Ascending aorta (tissue), 2 donors: ENCODE measurements at regions of chr9 and their contacts with region 1.

Region 1: GRCh38 chr9:127916665-127917613 is at the start of gene ST6GALNAC4:
- DNase-seq: peak; percentile 81 to 97
- H3K4me3 ChIP-seq: peak within 1 kb of the TSS; percentile 64 to 69
- H3K27ac ChIP-seq: peak within 1 kb of the TSS; percentile 69 to 79
- H3K4me1 ChIP-seq: peaks cover 10 to 47% of the 10 kb centered on the region in 2 donors
- H3K27me3 ChIP-seq: no peaks in the 10 kb centered on the region
- CTCF ChIP-seq: no peak
- total RNA-seq, gene ST6GALNAC4: 134 TPM

Region 2: DNA sequence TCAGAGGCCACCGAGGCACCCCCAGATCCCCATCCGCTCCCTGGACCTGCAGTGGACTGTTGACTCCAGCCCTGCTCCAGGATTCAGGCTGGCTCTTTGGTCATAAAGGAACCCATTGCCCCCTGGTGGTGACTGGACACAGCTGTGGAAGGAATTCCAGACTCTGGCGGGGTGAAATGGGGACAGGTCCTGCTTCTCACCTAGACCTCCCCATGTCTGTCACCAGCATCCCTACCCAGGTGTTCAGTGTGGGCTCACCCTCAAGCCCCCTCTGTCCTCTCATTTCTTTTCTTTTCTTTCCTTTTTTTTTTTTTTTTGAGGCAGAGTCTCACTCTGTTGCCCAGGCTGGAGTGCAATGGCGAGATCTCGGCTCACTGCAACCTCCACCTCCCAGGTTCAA is 330.4 kb before region 1 on chr9:
- intact Hi-C with region 1: loop called (anchors 1 kb)
- DNase-seq: peak in 1 of 2 donors; percentile 92
- H3K4me3 ChIP-seq: no peak overlapping the region
- H3K27ac ChIP-seq: no peak overlapping the region
- H3K4me1 ChIP-seq: peaks cover 0 to 9% of the 10 kb centered on the region in 2 donors
- H3K27me3 ChIP-seq: no peaks in the 10 kb centered on the region
- CTCF ChIP-seq: peak; percentile 78 to 96 (median 89)

Region 3: DNA sequence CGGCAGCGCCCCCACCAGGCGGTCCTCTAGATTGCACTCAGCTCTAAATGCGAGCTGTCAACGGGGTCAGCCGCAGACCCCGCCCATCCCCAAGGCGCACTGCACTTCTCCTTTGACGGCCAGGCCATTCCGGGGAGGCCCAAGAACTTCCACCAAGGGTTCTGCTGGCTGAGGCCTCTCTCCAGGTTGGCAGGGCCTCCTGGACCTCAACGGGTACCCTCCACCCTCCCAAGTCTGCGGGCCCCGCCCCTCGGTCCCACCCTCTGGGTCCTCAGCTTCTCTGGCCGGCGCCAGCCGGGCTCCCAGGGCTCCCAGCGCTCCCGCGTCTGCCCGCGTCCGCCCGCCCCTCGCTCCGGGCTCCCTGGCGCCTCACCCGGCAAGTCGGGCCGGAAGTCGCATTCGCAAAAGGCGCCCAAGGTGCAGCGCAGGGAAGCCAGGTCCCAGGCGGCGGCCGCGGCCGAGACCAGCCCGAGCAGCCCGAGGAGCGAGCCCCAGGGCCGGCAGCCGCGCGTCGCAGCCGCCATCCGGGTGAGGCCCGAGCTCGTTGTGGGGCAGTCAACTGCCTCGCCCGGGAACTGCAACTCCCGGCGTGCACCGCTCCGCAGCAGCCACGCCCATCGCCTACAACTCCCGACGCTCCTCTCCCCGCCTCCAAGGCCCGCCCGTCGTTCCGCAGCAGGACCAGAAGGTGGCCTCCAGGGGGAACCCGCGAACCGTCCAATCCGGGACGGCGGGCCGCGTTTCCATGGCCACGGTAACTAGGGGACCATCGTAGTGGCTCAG is 182.0 kb before region 1 on chr9 and contains the start of gene TOR2A:
- intact Hi-C with region 1: loop called (anchors 1 kb)
- DNase-seq: peak; percentile 80 to 99
- H3K4me3 ChIP-seq: peak within 1 kb of the TSS; percentile 73 to 80
- H3K27ac ChIP-seq: peak within 1 kb of the TSS; percentile 92 to 97
- H3K4me1 ChIP-seq: peaks cover 6 to 7% of the 10 kb centered on the region in 2 donors
- H3K27me3 ChIP-seq: no peaks in the 10 kb centered on the region
- CTCF ChIP-seq: peak; percentile 93 to 99 (median 97)
- total RNA-seq, gene TOR2A: not detected

Region 4: DNA sequence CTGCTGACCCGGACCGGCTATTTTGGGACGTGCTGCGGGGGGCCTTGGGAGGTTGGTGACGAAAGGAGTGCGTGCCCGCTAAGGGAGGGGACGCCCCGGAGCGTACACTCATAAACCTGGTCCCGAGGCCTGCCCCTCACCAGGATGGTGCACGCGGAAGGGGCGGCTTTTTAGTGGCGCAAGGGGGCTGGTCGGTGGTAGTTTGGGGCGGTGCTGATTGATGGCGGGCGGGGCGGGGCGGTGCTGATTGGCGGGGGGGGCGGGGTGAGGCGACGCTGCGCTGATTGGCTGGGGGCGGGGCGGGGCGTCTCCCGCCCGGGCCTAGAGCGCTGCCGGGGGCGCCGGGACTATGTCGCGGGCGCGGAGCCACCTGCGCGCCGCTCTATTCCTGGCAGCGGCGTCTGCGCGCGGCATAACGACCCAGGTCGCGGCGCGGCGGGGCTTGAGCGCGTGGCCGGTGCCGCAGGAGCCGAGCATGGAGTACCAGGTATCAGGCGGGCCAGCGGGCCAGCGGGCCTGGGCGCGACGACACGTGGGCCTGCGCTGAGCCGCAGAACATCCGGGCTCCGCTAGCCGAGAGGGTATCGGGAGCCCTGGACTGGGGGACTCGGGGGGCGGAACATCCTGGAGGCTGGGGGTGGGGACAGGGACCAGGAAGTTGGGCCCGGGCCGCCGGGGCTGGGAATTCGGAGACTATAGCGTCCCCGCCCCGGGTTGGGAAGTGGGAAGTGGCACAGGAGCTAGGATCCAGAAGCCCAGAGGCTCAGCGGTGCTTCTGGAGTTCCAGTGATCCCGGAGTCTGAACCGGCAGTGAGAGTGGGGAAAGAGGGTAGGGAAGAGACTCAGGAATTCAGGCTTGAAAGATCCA is 114.1 kb before region 1 on chr9 and contains the start of gene FPGS:
- intact Hi-C with region 1: loop called (anchors 2 kb)
- DNase-seq: peak; percentile 70 to 95
- H3K4me3 ChIP-seq: peak within 1 kb of the TSS; percentile 73 to 83
- H3K27ac ChIP-seq: peak within 1 kb of the TSS; percentile 92 to 99
- H3K4me1 ChIP-seq: peaks cover 21 to 31% of the 10 kb centered on the region in 2 donors
- H3K27me3 ChIP-seq: no peaks in the 10 kb centered on the region
- CTCF ChIP-seq: no peak
- total RNA-seq, gene FPGS: 286 TPM

Region 5: DNA sequence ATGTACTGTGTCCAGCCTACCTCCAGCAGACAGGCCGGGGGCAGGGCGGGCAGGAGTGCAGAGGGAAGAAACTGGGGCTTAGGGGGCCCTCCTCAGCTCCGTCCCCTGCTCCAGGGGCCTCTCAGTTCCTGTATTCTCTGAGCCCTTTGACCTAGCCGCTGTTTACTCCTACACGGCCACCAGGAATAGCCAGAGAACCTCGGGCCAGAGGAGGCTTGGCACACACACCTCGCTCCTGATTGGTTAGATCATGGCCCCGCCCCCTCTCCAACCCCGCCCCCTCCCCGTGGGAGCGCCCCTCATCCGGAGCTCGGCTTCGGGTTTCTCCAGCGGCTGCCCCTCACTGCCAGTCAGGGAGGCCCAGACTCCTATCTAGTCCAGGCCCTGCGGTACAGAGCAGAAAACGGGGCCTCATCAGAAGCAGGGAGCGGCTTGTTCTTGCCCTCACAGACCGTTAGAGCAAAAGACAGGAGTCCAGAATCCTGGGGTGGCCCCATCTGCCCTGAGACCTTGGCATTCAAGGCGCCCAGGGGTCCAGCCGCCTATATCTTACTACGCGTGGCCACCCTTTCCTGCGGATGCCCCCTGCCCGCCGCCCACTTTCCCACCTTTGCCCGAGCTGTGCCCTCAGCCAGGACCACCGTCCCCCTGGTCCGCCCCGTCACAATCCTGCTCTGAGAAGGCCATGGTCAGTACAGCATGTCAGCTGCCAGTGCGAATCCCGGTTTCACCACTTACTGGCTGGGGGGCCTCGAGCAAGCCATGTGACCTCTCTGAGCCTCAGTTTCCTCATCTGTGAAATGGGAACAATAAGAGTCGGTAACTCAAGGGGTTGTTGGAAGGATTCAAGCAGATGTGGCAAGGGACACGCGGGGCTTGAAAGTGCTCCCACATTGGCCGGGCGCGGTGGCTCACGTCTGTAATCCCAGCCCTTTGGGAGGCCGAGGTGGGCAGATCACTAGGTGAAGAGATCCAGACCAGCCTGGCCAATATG is 19.4 kb before region 1 on chr9:
- intact Hi-C with region 1: loop called (anchors 1 kb)
- DNase-seq: peak in 1 of 2 donors; percentile 92
- H3K4me3 ChIP-seq: peak overlapping the region; percentile 83 to 100
- H3K27ac ChIP-seq: peak overlapping the region; percentile 95 to 99
- H3K4me1 ChIP-seq: peaks cover 14 to 29% of the 10 kb centered on the region in 2 donors
- H3K27me3 ChIP-seq: no peaks in the 10 kb centered on the region
- CTCF ChIP-seq: no peak

Region 6: DNA sequence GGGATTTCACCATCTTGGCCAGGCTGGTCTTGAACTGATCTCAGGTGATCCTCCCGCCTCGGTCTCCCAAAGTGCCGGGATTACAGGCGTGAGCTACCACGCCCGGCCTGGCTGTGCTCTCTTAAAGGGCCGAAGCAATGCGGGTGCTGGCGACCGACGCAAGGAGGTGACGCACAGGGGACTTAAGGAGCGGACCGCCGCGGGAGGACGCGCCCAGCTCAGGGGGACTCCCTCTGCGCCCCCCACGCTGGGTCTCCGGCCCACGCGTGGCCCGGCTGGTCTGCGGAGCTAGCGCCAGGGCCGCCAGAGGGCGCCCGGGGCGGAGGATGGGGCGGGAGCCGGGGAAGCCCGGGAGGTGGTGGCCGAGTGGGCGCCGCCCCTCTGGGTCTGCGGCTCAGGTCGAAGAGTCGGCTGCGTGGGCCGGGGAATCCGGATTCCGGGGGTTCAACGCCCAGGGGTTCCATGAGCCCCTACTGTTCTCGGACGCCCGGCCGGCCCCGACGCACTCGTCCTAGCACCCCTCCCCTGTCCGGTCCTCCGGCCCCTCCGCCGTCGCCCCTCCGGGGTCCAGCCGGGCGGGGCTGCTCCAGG is 503.2 kb after region 1 on chr9:
- intact Hi-C with region 1: no loop called
- DNase-seq: peak in 1 of 2 donors; percentile 85
- H3K4me3 ChIP-seq: peak overlapping the region; percentile 89 to 93
- H3K27ac ChIP-seq: peak overlapping the region; percentile 82
- H3K4me1 ChIP-seq: peaks cover 0 to 17% of the 10 kb centered on the region in 2 donors
- H3K27me3 ChIP-seq: no peaks in the 10 kb centered on the region
- CTCF ChIP-seq: peak; percentile 81 to 90 (median 84)